Head of caudate nucleus (tissue), 42 donors: ENCODE measurements at regions of chr9 and their contacts with region 1.

Region 1: GRCh38 chr9:26946753-26947727 is at the start of gene PLAA:
- DNase-seq: peak; percentile 84 to 95 (median 90)

Region 2: DNA sequence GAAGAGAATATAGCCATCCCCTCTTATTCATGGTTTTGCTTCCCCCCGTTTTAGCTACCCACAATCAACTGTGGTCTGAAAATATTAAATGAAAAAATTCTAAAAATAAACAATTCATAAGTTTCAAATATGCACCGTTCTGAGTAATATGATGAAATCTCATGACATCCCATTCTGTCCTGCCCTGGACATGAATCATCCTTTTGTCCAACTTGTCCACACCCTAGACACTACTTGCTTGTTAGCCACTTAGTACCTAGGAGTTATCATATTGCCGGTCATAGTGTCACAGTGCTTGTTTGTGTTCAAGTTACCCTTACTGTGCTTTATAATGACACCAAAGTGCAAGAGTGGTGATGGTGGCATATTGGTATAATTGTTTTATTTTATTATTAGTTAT is 168.0 kb before region 1 on chr9:
- intact Hi-C with region 1: no loop called
- DNase-seq: no peak

Region 3: DNA sequence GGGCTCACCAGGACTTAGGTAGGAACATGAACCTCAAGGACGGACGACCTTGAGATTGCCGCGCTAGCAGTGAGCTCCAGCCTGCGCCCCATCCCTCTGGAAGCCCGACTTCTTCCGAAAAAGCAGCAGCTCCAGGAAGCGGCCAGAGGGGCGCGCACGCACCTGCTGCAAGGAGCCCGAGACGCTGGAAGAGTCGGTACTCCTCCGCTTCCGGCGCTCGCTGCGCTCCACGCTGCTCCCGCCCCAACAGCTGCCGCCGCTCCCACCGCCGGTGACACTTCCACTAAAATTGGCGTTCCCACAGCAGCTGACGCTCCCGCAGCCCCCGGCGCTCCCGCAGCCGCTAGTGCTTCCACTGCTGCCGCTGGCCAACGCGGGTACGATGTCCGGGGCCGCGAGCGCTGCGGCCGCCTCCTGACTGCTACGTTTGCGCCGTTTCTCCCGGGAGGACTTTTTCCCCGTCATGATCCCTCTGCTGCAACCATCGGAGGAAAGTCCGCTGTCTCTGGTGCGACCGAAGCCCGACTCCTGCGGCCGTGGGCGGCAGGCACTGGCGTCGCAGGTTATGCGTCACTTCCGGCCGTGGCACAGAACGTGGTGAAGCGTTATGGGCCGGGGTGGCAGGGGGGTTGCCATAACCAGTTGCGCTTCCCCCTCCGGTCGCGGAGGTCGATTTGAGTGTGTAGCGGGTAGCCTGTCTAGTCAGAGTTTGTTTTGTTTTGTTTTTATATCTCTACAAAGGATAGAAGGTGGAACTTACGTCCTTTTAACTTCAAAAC is 54.6 kb before region 1 on chr9 and contains the start of gene CAAP1:
- intact Hi-C with region 1: loop called (anchors 5 kb)
- DNase-seq: peak; percentile 88 to 97 (median 95)